ENCODE measurements at regions of chr1 and their contacts with region 1.

Region 1: GRCh38 chr1:19582302-19582701 is 61.8 kb upstream of the NBL1 start:
- DNase-seq: peak; percentile 84 to 87
- H3K4me3 ChIP-seq: no peak overlapping the region
- H3K27ac ChIP-seq: no peak overlapping the region
- H3K4me1 ChIP-seq: peaks cover 0 to 8% (median 3%) of the 10 kb centered on the region in 4 donors
- H3K27me3 ChIP-seq: no peaks in the 10 kb centered on the region
- CTCF ChIP-seq: peak in 5 of 7 experiments; percentile 37 to 74 (median 61)
- EP300 ChIP-seq: no peak
- POLR2A ChIP-seq: no peak

Region 2: DNA sequence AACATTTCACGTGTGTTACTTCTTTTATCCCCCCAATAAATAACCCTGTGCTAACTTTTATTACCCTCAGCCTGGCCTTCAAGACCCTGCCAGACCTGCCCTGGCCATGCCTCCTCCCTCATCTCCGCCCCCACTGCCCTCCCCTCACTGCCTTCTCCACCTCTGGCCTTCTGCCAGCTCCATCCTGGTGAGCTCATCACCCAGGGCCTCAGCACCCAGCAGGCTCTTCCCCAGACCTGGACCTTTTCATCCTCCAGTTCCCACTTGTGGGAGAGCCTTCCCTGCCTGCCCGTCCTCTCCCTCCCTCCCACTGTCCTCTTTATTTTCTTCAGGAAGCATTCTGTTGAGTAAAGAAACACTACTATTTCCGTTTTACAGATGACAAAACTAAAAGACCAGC is 198.2 kb before region 1 on chr1:
- intact Hi-C with region 1: loop called (anchors 10 kb)
- DNase-seq: peak in 1 of 2 donors; percentile 74
- H3K4me3 ChIP-seq: no peak overlapping the region
- H3K27ac ChIP-seq: peak overlapping the region in 4 of 5 donors; percentile 10 to 75 (median 72)
- H3K4me1 ChIP-seq: peaks cover 36 to 65% (median 48%) of the 10 kb centered on the region in 4 donors
- H3K27me3 ChIP-seq: no peaks in the 10 kb centered on the region
- CTCF ChIP-seq: no peak
- EP300 ChIP-seq: no peak
- POLR2A ChIP-seq: no peak

Region 3: DNA sequence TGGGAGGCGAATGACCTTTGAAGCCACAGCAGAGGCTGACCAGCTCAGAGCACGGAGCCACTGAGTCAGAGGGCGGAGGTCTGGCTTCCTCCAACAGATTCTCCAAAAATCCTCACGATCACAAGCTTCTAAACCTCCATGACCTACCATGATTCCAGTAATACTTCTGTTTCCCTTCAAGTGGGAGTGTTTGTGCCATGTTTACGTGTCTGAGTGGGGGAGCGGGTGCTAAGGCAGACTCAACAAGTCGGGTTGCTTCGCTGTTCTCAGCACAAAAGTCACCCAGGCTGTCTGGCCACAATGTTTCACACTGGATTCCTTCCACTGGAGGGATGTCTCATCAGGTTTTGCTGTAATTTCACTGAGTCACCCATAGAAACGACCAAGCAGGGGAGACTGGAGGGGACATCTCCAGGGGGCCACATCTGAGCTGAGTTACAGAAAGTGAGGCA is 184.0 kb before region 1 on chr1:
- intact Hi-C with region 1: no loop called
- DNase-seq: peak in 1 of 2 donors; percentile 30
- H3K4me3 ChIP-seq: no peak overlapping the region
- H3K27ac ChIP-seq: peak overlapping the region; percentile 51 to 76 (median 58)
- H3K4me1 ChIP-seq: peaks cover 26 to 98% (median 64%) of the 10 kb centered on the region in 4 donors
- H3K27me3 ChIP-seq: no peaks in the 10 kb centered on the region
- CTCF ChIP-seq: peak in 1 of 7 experiments; percentile 32
- EP300 ChIP-seq: no peak
- POLR2A ChIP-seq: no peak

Region 4: DNA sequence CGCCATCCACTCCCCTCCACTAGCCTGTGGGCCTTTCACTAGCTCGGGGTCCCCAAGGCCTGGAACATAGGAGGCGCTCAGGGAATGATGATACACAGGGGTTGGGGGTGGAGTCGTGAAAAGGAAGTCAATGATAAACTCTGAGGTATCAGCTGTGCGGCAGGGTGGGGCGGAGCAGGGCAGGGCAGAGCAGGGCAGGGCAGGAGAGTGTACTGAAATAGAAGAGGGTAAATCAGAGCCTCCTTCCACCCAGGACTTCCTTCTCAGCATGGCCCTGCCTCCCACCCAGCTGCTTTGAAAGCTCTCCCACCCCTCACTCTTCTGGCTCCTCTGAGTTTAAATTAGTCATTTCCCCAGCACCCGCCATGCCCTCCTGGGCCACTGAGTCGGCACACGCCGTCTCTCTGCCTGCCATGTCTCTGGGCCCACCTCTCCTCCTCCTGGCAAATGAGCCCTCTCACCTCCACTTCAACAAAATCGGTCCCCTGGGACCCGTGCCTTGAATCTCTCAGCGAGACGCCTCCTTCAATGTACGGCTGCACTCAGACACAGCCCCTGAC is 113.8 kb before region 1 on chr1:
- intact Hi-C with region 1: no loop called
- DNase-seq: peak; percentile 75 to 89
- H3K4me3 ChIP-seq: peak overlapping the region in 1 of 4 donors; percentile 25
- H3K27ac ChIP-seq: peak overlapping the region; percentile 73 to 85 (median 78)
- H3K4me1 ChIP-seq: peaks cover 73 to 99% (median 92%) of the 10 kb centered on the region in 4 donors
- H3K27me3 ChIP-seq: no peaks in the 10 kb centered on the region
- CTCF ChIP-seq: no peak
- EP300 ChIP-seq: no peak
- POLR2A ChIP-seq: no peak

Region 5: GRCh38 chr1:20124456-20125057 is 542.3 kb after region 1 on chr1:
- intact Hi-C with region 1: no loop called
- DNase-seq: peak in 1 of 2 donors; percentile 42
- H3K4me3 ChIP-seq: no peak overlapping the region
- H3K27ac ChIP-seq: no peak overlapping the region
- H3K4me1 ChIP-seq: peaks cover 0 to 10% (median 1%) of the 10 kb centered on the region in 4 donors
- H3K27me3 ChIP-seq: peaks cover 0 to 26% (median 0%) of the 10 kb centered on the region in 3 donors
- CTCF ChIP-seq: no peak
- EP300 ChIP-seq: no peak
- POLR2A ChIP-seq: no peak